ENCODE measurements at regions of chr4 and their contacts with region 1.

Region 1: DNA sequence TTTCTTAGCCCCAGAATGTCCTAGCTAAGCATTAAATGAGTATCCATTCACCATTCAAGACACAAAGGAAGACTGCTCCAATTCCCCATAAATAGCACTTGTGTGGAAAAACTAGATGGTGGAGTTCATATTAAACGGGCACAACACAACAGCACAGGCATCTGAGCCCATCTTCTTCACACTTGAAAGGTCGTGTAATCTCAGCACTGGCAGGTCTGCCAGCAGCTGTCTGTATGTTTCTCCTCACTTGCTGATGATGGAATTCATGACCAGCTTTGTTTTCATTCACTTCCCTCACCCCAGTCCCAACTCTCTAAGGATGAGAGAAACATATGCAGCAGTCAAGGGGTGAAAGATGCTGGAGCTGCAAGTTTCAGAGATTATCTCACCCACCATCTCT is 148.7 kb downstream of the AFAP1 start:
- DNase-seq: no peak
- ATAC-seq: no peak
- H3K4me3 ChIP-seq: no peak overlapping the region
- H3K4me3 Mint-ChIP-seq: no peak overlapping the region
- H3K27ac ChIP-seq: no peak overlapping the region
- H3K27ac Mint-ChIP-seq: no peak overlapping the region
- H3K4me1 ChIP-seq: no peaks in the 10 kb centered on the region
- H3K4me1 Mint-ChIP-seq: no peaks in the 10 kb centered on the region
- H3K27me3 ChIP-seq: no peaks in the 10 kb centered on the region
- H3K27me3 Mint-ChIP-seq: no peaks in the 10 kb centered on the region
- CTCF ChIP-seq: no peak

Region 2: GRCh38 chr4:7761720-7762119 is 29.3 kb before region 1 on chr4:
- CTCF ChIA-PET with region 1: no interaction called
- POLR2A ChIA-PET with region 1: no interaction called
- intact Hi-C with region 1: loop called in 1 of 2 experiments (anchors 1 kb)
- DNase-seq: peak; percentile 25 to 74 (median 44)
- ATAC-seq: peak; percentile 40
- H3K4me3 ChIP-seq: no peak overlapping the region
- H3K4me3 Mint-ChIP-seq: peak overlapping the region; percentile 56
- H3K27ac ChIP-seq: peak overlapping the region in 1 of 2 donors; percentile 13
- H3K27ac Mint-ChIP-seq: peak overlapping the region; percentile 83
- H3K4me1 ChIP-seq: peaks cover 24% of the 10 kb centered on the region
- H3K4me1 Mint-ChIP-seq: peaks cover 32% of the 10 kb centered on the region
- H3K27me3 ChIP-seq: no peaks in the 10 kb centered on the region
- H3K27me3 Mint-ChIP-seq: no peaks in the 10 kb centered on the region
- CTCF ChIP-seq: peak; percentile 54

Region 3: DNA sequence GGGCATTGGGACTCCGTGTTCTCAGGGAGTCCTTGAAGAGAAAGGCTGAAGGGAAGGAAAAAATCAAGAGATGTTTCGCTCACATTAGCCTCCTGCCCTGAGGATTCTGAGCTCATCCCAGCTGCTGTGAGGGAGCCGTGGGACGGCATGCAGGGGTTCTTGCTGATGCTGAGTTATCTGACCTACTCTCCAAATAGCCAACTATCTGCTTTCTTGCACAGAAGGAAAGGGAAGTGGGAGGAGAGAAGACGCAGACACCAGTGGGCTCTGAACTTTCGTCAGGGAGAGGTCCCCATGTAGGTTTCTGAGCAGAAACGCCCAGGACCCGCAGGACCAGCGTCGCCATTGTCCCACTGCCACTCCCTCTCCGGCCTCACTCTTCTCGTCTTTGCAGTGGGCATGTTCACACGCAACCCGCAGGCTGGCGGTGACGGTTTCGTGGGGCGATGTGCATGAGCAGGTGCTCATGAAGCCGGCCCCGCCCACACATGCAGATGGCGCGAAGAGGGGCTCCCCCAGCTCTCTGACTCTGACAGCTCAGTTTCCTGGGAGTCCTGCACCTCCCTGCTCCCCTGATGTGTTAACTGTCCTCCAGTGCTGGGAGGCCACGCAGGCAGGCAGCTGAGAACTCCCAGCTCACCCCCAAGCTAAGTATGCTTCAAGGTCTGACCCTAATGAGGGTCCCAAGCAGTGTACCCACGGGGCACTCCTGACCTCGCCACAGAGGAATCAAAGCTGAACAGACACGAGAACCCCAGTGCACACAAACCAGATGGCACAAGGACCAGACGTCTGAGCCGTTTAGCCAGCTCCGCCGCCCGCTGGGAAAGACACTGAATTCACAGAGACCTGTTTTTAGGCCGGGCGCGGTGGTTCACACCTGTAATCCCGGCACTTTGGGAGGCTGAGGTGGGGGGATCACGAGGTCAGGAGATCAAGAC is 381.3 kb after region 1 on chr4:
- CTCF ChIA-PET with region 1: no interaction called
- POLR2A ChIA-PET with region 1: no interaction called
- intact Hi-C with region 1: no loop called
- DNase-seq: peak in 1 of 14 experiments; percentile 40
- ATAC-seq: no peak
- H3K4me3 ChIP-seq: no peak overlapping the region
- H3K4me3 Mint-ChIP-seq: no peak overlapping the region
- H3K27ac ChIP-seq: no peak overlapping the region
- H3K27ac Mint-ChIP-seq: no peak overlapping the region
- H3K4me1 ChIP-seq: peaks cover 11% of the 10 kb centered on the region
- H3K4me1 Mint-ChIP-seq: no peaks in the 10 kb centered on the region
- H3K27me3 ChIP-seq: peaks cover 0 to 9% of the 10 kb centered on the region in 2 experiments
- H3K27me3 Mint-ChIP-seq: peaks cover 11% of the 10 kb centered on the region
- CTCF ChIP-seq: no peak

Measured in CD4-positive, alpha-beta T cell (primary cell).